Common myeloid progenitor, CD34-positive (primary cell): ENCODE measurements at regions of chr19 and their contacts with region 1.

Region 1: DNA sequence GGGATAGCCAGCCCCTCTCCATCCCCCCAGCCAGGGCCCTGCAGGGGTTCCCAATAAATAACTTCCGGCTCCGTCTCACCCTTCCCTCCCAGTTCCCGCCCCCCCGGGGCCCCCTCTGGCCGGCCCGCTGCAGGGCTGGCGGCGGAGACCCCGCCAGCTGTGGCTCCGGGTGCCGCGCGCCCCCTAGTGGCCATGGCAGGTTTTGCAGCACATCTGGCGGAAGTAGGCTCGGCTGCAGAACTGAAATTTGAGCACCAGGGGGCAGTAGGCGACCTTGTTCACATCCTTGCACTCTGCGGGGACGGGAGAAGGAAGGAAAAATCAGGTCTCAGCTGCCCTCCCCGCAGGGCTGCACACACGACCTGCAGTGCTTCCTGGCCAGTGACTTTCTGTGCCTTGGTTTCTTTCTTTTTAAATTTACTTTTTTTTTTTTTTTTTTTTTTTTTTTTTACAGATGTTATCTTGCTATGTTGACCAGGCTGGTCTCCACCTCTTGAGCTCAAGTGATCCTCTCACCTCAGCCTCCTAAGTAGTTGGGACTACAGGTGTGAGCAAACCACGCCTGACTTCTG is 3.6 kb upstream of the MYO1F start:
- DNase-seq: peak; percentile 77 to 89 (median 82)
- H3K4me3 ChIP-seq: peak overlapping the region in 1 of 7 experiments; percentile 10
- H3K27ac ChIP-seq: no peak overlapping the region
- H3K4me1 ChIP-seq: peaks cover 8 to 46% (median 43%) of the 10 kb centered on the region in 4 experiments
- H3K27me3 ChIP-seq: no peaks in the 10 kb centered on the region

Region 2: DNA sequence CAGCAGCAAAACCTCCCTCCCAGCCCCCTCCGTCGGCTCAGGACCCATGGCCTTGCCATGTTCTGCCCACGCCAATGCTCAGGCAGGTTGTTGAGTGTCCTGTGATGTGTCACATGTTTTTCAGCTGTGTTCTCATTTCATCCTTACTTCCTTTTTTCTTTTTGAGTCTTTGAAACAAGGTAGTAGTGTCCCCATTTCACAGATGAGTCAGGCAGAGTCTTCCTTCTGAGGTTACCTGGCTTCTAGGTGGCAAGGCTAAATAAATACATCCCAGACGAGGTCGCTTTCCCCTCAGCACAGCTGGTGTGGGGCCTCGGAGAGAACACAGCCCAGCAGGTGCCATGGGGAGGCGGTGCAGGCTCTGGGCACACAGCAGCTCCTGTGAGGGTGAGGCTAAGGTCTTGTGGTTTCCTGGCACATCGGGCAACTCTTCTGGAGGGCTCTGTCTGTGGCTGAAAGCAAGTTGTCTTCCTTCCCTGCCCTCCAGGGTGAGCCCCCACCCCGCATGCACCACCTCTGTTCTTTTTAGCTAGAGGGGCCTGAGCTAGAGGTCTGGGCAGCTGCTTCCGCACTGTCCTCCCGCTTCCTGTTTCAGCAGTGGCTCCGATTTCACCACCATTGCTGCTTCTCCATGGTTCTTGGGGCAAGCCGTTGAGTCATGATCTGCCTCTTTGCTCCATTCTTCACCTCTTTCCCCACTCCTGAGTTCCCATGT is 93.5 kb before region 1 on chr19:
- CTCF ChIA-PET with region 1: interaction called, 59 read pairs
- POLR2A ChIA-PET with region 1: interaction called, 6 read pairs
- DNase-seq: peak; percentile 85 to 98 (median 97)
- H3K4me3 ChIP-seq: peak overlapping the region in 4 of 7 experiments; percentile 3 to 37 (median 17)
- H3K27ac ChIP-seq: peak overlapping the region in 1 of 2 experiments; percentile 55
- H3K4me1 ChIP-seq: peaks cover 5 to 56% (median 47%) of the 10 kb centered on the region in 4 experiments
- H3K27me3 ChIP-seq: no peaks in the 10 kb centered on the region

Region 3: GRCh38 chr19:8505680-8506401 is 75.0 kb before region 1 on chr19:
- CTCF ChIA-PET with region 1: interaction called, 11 read pairs
- POLR2A ChIA-PET with region 1: no interaction called
- DNase-seq: peak in 2 of 3 donors; percentile 55 to 60
- H3K4me3 ChIP-seq: peak overlapping the region; percentile 51 to 85 (median 68)
- H3K27ac ChIP-seq: no peak overlapping the region
- H3K4me1 ChIP-seq: peaks cover 14 to 63% (median 58%) of the 10 kb centered on the region in 4 experiments
- H3K27me3 ChIP-seq: no peaks in the 10 kb centered on the region

Region 4: GRCh38 chr19:8557642-8558238 is 23.1 kb before region 1 on chr19:
- CTCF ChIA-PET with region 1: interaction called, 96 read pairs
- POLR2A ChIA-PET with region 1: no interaction called
- DNase-seq: no peak
- H3K4me3 ChIP-seq: no peak overlapping the region
- H3K27ac ChIP-seq: no peak overlapping the region
- H3K4me1 ChIP-seq: peaks cover 0 to 13% (median 2%) of the 10 kb centered on the region in 4 experiments
- H3K27me3 ChIP-seq: no peaks in the 10 kb centered on the region

Region 5: DNA sequence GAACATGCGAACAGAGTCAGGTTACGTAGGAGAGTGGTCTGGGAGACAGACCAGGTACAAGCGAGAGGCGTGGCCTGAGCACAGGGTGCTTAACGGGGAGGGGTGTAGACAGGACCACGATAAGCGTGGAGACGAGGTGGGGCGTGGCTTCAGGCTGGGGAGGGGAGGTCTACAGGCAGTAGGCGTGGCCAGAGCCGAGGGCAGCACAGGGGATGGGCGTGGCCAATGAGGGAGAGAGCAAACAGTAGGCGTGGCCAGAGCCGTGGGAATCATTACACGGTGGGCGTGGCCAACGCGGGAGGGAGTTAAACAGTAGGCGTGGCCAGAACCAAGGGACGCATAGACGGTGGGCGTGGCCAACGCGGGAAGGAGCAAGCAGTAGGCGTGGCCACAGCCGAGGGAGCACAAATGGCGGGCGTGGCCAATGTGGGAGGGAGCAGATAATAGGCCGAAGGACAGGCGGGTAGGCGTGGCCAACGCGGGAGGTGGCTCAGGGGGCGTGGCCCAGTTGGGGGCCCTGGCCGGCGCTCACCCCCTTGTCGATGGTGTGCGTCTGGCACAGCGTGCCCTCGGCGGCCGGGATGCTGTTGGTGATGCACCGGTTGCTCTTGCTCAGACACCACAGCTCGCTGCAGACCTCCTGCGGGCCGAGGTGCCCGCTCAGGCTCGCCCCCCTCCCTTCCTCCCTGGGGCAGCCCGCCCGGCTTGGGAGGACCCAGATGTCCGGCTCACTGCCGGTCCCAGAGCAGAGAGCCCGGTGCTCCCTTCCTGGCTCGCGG is 11.6 kb after region 1 on chr19:
- CTCF ChIA-PET with region 1: interaction called, 18 read pairs
- POLR2A ChIA-PET with region 1: no interaction called
- DNase-seq: peak; percentile 93 to 96 (median 96)
- H3K4me3 ChIP-seq: peak overlapping the region; percentile 17 to 79 (median 65)
- H3K27ac ChIP-seq: no peak overlapping the region
- H3K4me1 ChIP-seq: peaks cover 0 to 22% (median 18%) of the 10 kb centered on the region in 4 experiments
- H3K27me3 ChIP-seq: peaks cover 0 to 5% (median 0%) of the 10 kb centered on the region in 5 experiments

Region 6: GRCh38 chr19:8615813-8616596 is 35.2 kb after region 1 on chr19:
- CTCF ChIA-PET with region 1: interaction called, 28 read pairs
- POLR2A ChIA-PET with region 1: no interaction called
- DNase-seq: peak; percentile 59 to 80 (median 75)
- H3K4me3 ChIP-seq: peak overlapping the region in 1 of 7 experiments; percentile 47
- H3K27ac ChIP-seq: no peak overlapping the region
- H3K4me1 ChIP-seq: peaks cover 0 to 13% (median 4%) of the 10 kb centered on the region in 4 experiments
- H3K27me3 ChIP-seq: no peaks in the 10 kb centered on the region

Region 7: GRCh38 chr19:8673276-8673891 is 92.6 kb after region 1 on chr19:
- CTCF ChIA-PET with region 1: no interaction called
- POLR2A ChIA-PET with region 1: no interaction called
- DNase-seq: peak in 2 of 3 donors; percentile 15 to 36
- H3K4me3 ChIP-seq: no peak overlapping the region
- H3K27ac ChIP-seq: no peak overlapping the region
- H3K4me1 ChIP-seq: peaks cover 8 to 40% (median 29%) of the 10 kb centered on the region in 4 experiments
- H3K27me3 ChIP-seq: peaks cover 0 to 4% (median 0%) of the 10 kb centered on the region in 5 experiments

Region 8: GRCh38 chr19:8684001-8684902 is 103.5 kb after region 1 on chr19:
- CTCF ChIA-PET with region 1: no interaction called
- POLR2A ChIA-PET with region 1: no interaction called
- DNase-seq: peak in 2 of 3 donors; percentile 44 to 57
- H3K4me3 ChIP-seq: no peak overlapping the region
- H3K27ac ChIP-seq: no peak overlapping the region
- H3K4me1 ChIP-seq: peaks cover 0 to 21% (median 2%) of the 10 kb centered on the region in 4 experiments
- H3K27me3 ChIP-seq: peaks cover 0 to 2% (median 0%) of the 10 kb centered on the region in 5 experiments